ENCODE measurements at regions of chr14 and their contacts with region 1.

Region 1: GRCh38 chr14:102316743-102317563 is 2.6 kb upstream of the ZNF839 start:
- DNase-seq: peak; percentile 93
- H3K4me3 ChIP-seq: peak overlapping the region; percentile 59 to 62
- H3K27ac ChIP-seq: peak overlapping the region; percentile 70 to 90
- H3K4me1 ChIP-seq: peaks cover 5 to 26% of the 10 kb centered on the region in 2 experiments; a peak in 3 of 4 replicates
- H3K27me3 ChIP-seq: no peaks in the 10 kb centered on the region
- CTCF ChIP-seq: peak; percentile 77
- EP300 ChIP-seq: no peak; a peak in 1 of 4 replicates
- RAD21 ChIP-seq: no peak

Region 2: GRCh38 chr14:102046343-102047278 is 270.3 kb before region 1 on chr14:
- CTCF ChIA-PET with region 1: interaction called, 11 read pairs
- POLR2A ChIA-PET with region 1: no interaction called
- DNase-seq: peak; percentile 85
- H3K4me3 ChIP-seq: no peak overlapping the region
- H3K27ac ChIP-seq: no peak overlapping the region
- H3K4me1 ChIP-seq: no peaks in the 10 kb centered on the region
- H3K27me3 ChIP-seq: no peaks in the 10 kb centered on the region
- CTCF ChIP-seq: peak; percentile 30
- EP300 ChIP-seq: no peak
- RAD21 ChIP-seq: peak; percentile 74

Region 3: DNA sequence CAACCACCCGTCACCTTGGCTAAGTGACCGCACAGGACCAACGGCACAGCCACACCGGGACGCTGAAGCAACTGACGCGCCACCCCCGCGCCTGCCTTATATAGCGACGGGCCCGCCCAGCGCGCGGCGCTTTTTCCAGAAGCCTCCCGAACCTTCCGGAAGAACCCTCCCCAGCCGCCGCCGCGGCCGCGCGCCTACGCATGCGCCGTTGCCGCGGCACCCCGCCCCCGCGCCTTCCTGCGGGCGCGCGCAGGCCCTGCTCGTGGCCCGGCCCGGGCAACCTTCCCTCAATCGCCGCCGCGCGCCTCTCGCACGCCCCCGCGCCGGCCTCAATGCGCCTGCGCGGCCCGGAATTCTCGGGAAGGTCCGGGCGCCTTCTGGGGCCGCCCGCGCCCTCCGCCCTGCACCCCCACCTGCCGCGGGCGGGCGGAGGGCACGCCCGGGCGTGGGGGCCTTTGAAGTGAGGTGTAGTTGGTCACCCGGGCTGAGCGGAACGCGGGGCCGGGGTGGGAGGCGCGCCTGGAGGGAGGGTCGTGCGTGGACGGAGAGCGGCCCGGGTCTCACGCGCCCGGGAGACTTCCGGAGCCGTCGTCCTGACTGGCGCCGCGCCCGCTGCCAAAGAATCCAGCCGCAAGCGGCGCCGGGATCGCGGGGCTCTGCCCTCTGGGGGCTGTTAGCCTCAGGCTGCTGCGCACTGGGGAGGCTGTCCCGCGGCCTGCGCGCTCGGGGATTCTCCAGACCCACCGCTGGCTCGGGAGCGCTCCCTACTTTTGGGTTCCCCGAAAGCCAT is 229.8 kb before region 1 on chr14 and contains the start of gene HSP90AA1:
- CTCF ChIA-PET with region 1: interaction called, 12 read pairs
- POLR2A ChIA-PET with region 1: interaction called, 3 read pairs
- DNase-seq: peak; percentile 99
- H3K4me3 ChIP-seq: peak within 1 kb of the TSS; percentile 81 to 94
- H3K27ac ChIP-seq: peak within 1 kb of the TSS; percentile 88 to 92
- H3K4me1 ChIP-seq: peaks cover 28 to 32% of the 10 kb centered on the region in 2 experiments
- H3K27me3 ChIP-seq: no peaks in the 10 kb centered on the region
- CTCF ChIP-seq: peak; percentile 31; the same call in 1 of the 2 replicates
- EP300 ChIP-seq: peak; percentile 1 to 92; a peak in 2 of 4 replicates
- RAD21 ChIP-seq: no peak
- polyA plus RNA-seq, gene HSP90AA1: 269 and 298 TPM in 2 replicates

Region 4: DNA sequence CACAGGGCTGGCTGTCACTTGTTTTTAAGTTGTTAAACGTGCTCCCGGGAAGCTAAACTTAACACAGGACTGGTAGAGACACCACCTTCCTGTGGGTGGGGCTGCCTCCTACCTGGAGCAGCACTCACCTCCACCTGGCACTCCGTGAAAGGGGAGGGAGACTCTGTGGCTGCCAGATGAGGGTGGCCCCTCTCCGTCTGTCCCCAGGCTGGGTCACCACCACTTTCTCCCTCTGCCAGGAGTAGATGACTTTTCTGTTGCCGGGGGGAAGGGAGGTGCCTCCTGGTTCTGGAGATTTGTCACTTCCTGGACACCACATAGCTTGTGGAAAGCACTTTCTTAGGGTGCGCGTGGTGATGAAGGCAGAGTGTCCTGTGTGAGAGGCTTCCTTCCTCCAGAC is 95.9 kb before region 1 on chr14:
- CTCF ChIA-PET with region 1: interaction called, 12 read pairs
- POLR2A ChIA-PET with region 1: no interaction called
- DNase-seq: no peak
- H3K4me3 ChIP-seq: no peak overlapping the region
- H3K27ac ChIP-seq: no peak overlapping the region
- H3K4me1 ChIP-seq: peaks cover 5 to 15% of the 10 kb centered on the region in 2 experiments; a peak in 2 of 4 replicates
- H3K27me3 ChIP-seq: no peaks in the 10 kb centered on the region
- CTCF ChIP-seq: no peak
- EP300 ChIP-seq: no peak
- RAD21 ChIP-seq: no peak

Region 5: DNA sequence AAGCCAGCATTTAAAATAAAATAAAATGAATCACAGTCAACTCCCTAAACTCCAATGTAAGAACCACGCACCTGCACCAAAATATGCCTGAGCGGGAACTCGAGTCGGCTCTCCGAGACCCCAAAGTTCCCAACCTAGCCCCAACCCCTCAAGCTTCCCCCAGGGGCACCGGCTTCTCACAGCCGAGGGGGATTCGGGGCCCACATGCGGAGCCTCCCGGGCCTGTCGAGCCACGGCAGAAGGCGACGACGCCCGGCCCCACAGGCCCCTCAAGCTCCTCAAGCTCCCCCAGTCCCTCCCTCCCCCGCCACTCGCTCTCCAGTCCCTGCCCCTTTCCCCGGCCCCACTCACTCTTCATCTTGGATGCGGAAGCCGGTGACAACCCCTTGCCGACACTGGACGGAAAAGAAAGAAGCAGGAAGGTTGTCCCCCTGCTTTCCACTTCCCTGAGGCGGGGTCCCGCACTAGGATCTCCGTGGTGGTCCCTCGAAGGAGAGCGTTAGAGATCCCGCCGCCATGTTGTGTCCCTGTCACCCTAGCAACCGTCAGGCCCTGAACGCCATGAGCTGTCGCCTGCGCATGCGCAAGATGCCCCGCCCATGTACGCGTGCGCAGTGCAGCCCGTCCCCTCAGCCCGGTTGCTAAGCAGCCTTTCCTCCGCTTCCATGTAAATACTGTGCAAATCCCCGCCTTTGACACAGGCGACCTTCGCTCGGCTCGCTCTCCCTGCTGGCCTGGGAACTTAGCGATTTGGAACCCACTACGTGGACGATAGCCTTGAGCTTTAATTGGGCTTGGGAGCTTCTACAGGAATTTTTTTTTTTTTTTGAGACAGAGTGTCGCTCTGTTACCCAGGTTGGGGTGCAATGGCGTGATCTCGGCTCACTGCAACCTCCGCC is 12.1 kb before region 1 on chr14 and contains the start of gene MOK:
- CTCF ChIA-PET with region 1: interaction called, 48 read pairs
- POLR2A ChIA-PET with region 1: interaction called, 3 read pairs
- DNase-seq: peak; percentile 99
- H3K4me3 ChIP-seq: peak within 1 kb of the TSS; percentile 68 to 86
- H3K27ac ChIP-seq: peak within 1 kb of the TSS in 1 of 2 experiments; percentile 75; a peak in 3 of 4 replicates
- H3K4me1 ChIP-seq: no peaks in the 10 kb centered on the region; a peak in 1 of 4 replicates
- H3K27me3 ChIP-seq: no peaks in the 10 kb centered on the region
- CTCF ChIP-seq: 0 out of 2 replicates have a peak, but pooled peaks have one; percentile 10
- EP300 ChIP-seq: no peak
- RAD21 ChIP-seq: no peak; the same call in 1 of the 2 replicates
- polyA plus RNA-seq, gene MOK: 13.3 and 15.2 TPM in 2 replicates

Measured in SK-N-SH (cell line).